BJ (cell line): ENCODE measurements at regions of chr7 and their contacts with region 1.

Region 1: DNA sequence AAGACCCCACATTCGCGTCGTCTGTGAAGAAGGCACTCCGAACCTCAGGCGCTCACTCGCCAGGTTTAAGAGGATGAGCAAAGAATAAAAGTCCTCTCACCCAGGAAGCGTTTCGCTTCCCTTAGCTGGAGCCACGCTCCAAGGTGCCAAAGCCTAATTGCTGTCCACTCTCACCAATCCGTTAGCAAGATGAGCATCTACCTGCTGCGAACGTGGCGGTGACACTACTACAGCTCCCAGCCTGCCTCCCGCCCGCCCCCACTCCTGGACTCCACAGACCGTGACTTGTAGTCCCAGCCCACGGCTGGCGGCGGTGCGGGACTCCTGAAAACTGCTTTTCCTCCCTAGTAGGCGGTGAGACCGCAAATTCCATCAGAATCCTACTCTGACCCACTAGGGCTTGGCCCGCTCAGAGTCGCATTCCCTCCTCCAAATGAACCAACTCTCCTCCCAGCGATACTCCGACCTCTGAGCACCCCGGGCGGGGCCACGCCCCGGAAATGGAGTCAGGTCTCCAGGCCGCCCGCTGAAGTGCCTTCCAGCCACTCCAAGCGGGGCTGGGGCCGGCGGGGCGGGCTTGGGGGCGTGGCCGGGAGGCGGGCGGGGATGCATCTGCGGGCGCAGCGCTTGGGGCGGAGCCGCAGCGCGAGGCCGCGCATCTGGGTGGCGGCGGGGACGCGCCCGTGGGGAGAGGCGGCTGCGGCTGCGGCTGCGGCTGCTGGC is 521 bp upstream of the PTPN12 start:
- DNase-seq: peak; percentile 65
- H3K4me3 ChIP-seq: peak overlapping the region; percentile 97
- H3K27me3 ChIP-seq: no peaks in the 10 kb centered on the region
- CTCF ChIP-seq: no peak

Region 2: GRCh38 chr7:77378584-77378983 is 158.0 kb before region 1 on chr7:
- CTCF ChIA-PET with region 1: no interaction called
- POLR2A ChIA-PET with region 1: interaction called, 14 read pairs
- DNase-seq: no peak
- H3K4me3 ChIP-seq: no peak overlapping the region
- H3K27me3 ChIP-seq: no peaks in the 10 kb centered on the region
- CTCF ChIP-seq: no peak

Region 3: DNA sequence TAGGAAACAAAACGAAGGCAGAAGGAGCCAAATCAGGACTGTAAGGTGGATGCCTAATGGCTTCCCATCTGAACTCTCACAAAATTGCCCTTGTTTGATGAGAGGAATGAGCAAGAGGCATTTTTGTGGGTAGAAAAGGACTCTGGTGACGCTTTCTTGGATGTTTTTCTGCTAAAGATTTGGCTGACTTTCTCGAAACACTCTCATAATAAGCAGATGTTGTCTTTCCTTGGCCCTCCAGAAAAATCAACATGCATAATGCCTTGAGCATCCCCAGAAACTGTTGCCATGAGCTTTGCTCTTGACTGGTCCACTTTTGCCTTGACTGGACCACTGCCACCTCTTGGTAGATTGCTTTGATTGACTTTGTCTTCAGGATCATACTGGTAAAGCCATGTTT is 14.0 kb after region 1 on chr7:
- CTCF ChIA-PET with region 1: interaction called, 5 read pairs
- POLR2A ChIA-PET with region 1: interaction called, 12 read pairs
- DNase-seq: peak; percentile 82
- H3K4me3 ChIP-seq: no peak overlapping the region
- H3K27me3 ChIP-seq: no peaks in the 10 kb centered on the region
- CTCF ChIP-seq: no peak